AG04450 (cell line): ENCODE measurements at regions of chr15 and their contacts with region 1.

Region 1: DNA sequence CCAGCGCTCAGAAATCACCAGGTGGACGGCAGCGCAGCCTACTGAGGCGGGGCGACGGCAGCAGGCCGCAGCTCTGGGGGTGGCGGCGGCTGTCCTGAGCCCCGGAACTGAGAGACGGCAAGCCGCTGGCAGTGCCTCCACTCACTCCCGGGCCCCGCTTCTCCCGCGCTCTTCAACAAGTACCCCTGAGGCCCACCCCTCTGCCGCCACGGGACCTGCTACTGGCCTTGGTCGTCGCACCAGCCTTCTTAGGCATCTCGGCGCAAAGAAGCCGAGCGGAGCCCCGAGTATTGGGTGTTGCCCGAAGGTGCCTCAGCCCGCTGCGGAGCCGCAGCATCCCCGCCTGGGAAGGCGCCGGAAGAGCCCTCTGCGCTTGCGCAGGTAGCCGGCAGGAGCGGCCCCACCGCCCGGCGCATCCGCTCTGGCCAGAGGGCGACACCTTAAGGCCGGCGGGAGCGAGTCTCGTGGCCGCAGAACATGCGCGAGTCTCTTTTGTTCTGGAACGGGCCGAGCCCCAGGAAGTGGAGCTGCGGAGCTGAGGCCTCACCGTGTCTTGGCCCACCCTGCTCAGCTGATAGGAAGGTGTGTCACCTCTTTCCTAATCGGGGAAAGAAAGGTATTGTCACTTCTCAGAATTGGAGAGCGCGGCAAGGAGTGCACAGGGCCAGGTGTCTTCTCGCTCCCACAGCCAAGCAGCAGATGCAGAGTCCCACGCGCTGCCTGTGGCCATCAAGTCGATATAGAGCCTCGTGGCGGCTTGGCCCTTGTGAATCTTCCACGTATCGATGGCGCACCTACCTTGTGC is at the start of gene C15orf40:
- DNase-seq: peak; percentile 78
- H3K4me3 ChIP-seq: peak within 1 kb of the TSS; percentile 99
- H3K27ac ChIP-seq: peak within 1 kb of the TSS; percentile 80
- H3K27me3 ChIP-seq: no peaks in the 10 kb centered on the region
- CTCF ChIP-seq: peak; percentile 66
- polyA plus RNA-seq, gene C15orf40: 16.7 and 17.3 TPM in 2 replicates

Region 2: DNA sequence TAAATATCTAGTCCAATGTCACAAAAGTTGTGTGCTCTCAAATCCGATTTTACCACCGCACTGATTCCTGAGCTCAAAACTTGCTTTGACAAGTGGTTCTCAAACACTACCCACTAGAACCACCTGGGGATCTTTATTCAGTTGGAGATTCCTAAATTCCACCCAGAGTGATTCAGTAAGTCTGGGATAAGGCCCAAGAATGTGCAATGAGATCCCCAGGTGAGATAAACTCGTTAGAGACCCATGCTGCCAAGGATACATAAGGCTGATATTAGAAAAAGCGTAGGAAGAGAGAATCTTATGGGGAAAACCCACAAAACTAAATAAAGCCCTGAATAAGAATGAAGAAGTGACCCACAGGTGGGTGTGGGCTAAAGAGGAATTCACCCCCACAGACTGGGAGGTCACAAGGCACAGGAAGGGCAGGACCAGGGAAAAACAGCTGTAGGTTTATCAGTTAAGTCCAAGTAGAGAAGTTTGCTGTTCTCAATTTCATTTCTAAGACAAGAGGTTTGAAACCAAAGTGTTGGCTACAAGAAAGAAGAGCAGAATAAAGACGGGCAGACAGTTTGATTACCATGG is 459.7 kb before region 1 on chr15:
- CTCF ChIA-PET with region 1: no interaction called
- POLR2A ChIA-PET with region 1: no interaction called
- DNase-seq: no peak
- H3K4me3 ChIP-seq: no peak overlapping the region
- H3K27ac ChIP-seq: no peak overlapping the region
- H3K27me3 ChIP-seq: no peaks in the 10 kb centered on the region
- CTCF ChIP-seq: no peak

Region 3: DNA sequence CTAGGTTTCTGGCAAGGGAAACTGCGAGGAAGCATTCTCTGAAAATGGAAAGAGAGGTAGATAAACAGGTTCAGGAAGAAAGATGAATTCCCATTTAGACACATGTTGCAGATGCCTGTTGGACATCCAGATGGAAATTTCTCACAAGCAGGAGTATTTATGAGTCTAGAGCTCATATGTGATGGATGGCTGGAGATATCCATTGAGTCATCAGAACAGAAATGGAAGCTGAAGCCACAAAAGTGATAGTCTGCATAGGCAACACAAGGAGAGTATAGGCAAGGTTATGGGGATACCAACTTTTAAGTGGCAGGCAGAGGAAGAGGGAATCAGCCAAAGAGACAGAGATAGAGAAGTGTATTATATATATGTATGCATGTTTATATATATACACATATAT is 31.7 kb before region 1 on chr15:
- CTCF ChIA-PET with region 1: no interaction called
- POLR2A ChIA-PET with region 1: no interaction called
- DNase-seq: no peak
- H3K4me3 ChIP-seq: no peak overlapping the region
- H3K27ac ChIP-seq: no peak overlapping the region
- H3K27me3 ChIP-seq: no peaks in the 10 kb centered on the region
- CTCF ChIP-seq: no peak

Region 4: GRCh38 chr15:82992436-82992998 is 19.0 kb before region 1 on chr15:
- CTCF ChIA-PET with region 1: interaction called, 18 read pairs
- POLR2A ChIA-PET with region 1: no interaction called
- DNase-seq: no peak
- H3K4me3 ChIP-seq: no peak overlapping the region
- H3K27ac ChIP-seq: no peak overlapping the region
- H3K27me3 ChIP-seq: no peaks in the 10 kb centered on the region
- CTCF ChIP-seq: no peak

Region 5: GRCh38 chr15:83030021-83030420 is 18.5 kb after region 1 on chr15:
- CTCF ChIA-PET with region 1: interaction called, 10 read pairs
- POLR2A ChIA-PET with region 1: interaction called, 8 read pairs
- DNase-seq: no peak
- H3K4me3 ChIP-seq: no peak overlapping the region
- H3K27ac ChIP-seq: no peak overlapping the region
- H3K27me3 ChIP-seq: no peaks in the 10 kb centered on the region
- CTCF ChIP-seq: no peak

Region 6: DNA sequence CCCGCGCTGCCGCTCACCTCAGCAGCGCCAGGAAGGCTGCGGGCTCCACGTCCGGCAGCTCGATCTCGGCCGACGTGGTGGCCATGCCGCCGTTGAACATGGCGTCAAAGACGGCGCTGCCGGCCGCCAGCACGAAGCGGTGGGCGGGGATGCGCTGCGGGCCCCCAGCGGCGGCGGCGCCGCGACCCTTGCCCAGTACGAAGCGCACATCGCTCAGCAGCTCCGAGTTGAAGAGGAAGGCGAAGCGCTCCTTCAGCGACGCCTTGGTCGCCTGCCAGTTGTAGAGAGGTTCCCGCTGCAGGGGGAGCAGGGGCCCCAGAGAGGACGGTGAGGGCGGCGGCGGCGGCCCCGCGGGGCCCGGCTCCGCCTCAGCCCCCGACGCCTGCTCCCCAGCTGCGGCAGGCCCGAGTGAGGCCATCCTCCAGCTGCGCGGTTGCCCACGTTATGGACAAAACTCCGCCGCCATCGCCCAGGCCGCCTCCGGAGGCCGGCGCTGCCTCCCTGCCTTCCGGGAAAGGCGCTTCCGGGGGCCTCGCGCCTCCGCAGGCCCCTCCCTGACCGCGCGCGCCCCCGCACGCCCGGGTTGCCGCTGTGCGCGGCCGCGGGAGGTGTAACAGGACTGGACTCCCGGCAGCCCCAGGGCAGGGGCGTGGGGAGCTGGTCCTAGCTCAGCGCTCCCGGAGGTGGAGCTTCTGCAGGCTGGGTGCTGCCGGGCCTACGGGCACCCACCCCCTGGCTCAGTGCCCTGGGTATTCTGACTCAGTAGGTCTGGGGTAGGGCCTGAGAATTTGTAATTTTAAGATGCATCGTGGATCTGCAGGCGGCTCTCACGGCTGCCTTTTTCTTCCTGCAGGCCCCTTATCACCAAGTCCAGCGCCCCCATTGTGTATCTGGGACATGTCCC is 55.5 kb after region 1 on chr15 and contains the start of gene BTBD1:
- CTCF ChIA-PET with region 1: interaction called, 19 read pairs
- POLR2A ChIA-PET with region 1: interaction called, 4 read pairs
- DNase-seq: peak; percentile 90
- H3K4me3 ChIP-seq: peak within 1 kb of the TSS; percentile 89
- H3K27ac ChIP-seq: peak within 1 kb of the TSS; percentile 67
- H3K27me3 ChIP-seq: no peaks in the 10 kb centered on the region
- CTCF ChIP-seq: no peak
- polyA plus RNA-seq, gene BTBD1: 89.8 and 113 TPM in 2 replicates